Right ventricle myocardium inferior (tissue), 1 donor: ENCODE measurements at regions of chr15 and their contacts with region 1.

Region 1: GRCh38 chr15:77107531-77108355 is 36.8 kb upstream of the TSPAN3 start:
- DNase-seq: no peak
- ATAC-seq: peak; percentile 62

Region 2: DNA sequence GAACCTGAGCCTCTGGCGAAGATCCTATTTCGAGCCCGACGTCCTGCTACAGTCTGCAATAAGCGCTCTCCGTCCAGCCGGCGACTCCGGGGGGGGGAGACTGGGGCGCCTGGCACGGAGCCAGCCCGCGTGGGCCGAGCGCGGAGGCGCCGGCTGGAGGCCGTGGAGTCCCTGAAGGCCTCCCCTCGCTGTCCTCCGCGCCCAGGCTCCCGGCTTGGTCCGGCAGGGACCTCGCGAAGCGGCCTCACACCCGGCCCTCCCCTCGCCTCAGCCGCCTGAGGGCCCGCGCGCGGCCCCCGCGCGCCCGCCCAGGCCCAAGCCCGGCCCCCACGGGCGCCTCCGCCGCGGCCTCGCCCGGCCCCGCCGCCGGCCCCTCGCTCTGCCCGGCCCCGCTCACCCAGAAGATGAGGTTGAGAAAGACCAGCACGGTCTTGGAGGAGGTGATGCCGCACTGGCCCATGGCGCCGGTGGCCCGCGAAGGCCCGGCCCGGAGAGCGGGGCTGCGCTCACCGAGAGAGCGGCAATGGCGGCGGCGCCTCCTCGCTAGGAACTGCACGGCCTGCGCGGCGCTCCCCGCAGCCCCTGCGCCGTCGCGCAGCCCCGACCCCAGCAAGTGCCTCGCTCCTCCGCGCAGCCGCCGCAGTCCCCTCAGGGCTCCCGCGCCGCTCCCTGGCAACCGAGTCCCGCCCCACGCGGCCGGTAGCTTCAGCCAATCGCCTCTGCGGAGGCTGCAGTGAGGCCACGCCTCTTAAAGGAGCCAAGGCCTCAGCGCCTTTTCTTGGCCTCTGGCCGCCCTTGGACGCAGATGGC is 37.0 kb before region 1 on chr15 and contains the start of gene TSPAN3:
- intact Hi-C with region 1: loop called (anchors 5 kb)
- DNase-seq: peak; percentile 96
- ATAC-seq: peak; percentile 98
- total RNA-seq, gene TSPAN3: 98.3 TPM

Region 3: DNA sequence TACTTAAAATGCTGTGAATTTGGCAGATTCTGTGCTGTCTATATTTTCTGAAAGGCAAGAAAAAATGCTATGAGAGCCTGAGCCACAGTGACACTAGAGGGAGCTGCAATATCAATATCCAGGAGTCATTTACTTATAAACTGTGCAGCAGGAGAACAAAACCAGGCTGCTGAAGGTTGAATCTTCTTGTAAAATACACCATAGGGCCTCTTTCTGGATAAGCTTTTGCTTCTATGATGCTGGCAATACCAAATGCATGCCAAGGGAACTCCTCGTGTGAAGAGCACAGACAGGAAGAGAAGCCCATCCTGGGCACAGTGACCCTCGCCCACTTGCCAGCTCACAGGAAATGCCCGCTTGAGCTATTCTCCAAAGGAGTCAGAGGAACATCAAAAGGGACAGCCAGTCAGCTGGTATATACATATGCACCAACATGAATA is 11.2 kb after region 1 on chr15:
- intact Hi-C with region 1: no loop called
- DNase-seq: no peak
- ATAC-seq: peak; percentile 58

Region 4: GRCh38 chr15:77633134-77633912 is 525.6 kb after region 1 on chr15:
- intact Hi-C with region 1: loop called (anchors 5 kb)
- DNase-seq: peak; percentile 94
- ATAC-seq: peak; percentile 96